ENCODE measurements at regions of chr17 and their contacts with region 1.

Region 1: GRCh38 chr17:30378824-30379302 is at the start of gene CPD:
- DNase-seq: peak; percentile 97
- H3K4me3 Mint-ChIP-seq: peak within 1 kb of the TSS; percentile 92
- H3K27ac Mint-ChIP-seq: peak within 1 kb of the TSS; percentile 97
- H3K4me1 Mint-ChIP-seq: peaks cover 67% of the 10 kb centered on the region
- H3K27me3 Mint-ChIP-seq: no peaks in the 10 kb centered on the region
- total RNA-seq, gene CPD: 29.7 and 35.3 TPM in 2 replicates

Region 2: GRCh38 chr17:30291543-30292285 is 87.1 kb before region 1 on chr17 and contains the start of gene BLMH:
- intact Hi-C with region 1: loop called (anchors 2 kb)
- DNase-seq: peak; percentile 80
- H3K4me3 Mint-ChIP-seq: peak within 1 kb of the TSS; percentile 97
- H3K27ac Mint-ChIP-seq: peak within 1 kb of the TSS; percentile 90
- H3K4me1 Mint-ChIP-seq: peaks cover 13% of the 10 kb centered on the region
- H3K27me3 Mint-ChIP-seq: no peaks in the 10 kb centered on the region
- total RNA-seq, gene BLMH: 64.8 and 64.9 TPM in 2 replicates

Region 3: DNA sequence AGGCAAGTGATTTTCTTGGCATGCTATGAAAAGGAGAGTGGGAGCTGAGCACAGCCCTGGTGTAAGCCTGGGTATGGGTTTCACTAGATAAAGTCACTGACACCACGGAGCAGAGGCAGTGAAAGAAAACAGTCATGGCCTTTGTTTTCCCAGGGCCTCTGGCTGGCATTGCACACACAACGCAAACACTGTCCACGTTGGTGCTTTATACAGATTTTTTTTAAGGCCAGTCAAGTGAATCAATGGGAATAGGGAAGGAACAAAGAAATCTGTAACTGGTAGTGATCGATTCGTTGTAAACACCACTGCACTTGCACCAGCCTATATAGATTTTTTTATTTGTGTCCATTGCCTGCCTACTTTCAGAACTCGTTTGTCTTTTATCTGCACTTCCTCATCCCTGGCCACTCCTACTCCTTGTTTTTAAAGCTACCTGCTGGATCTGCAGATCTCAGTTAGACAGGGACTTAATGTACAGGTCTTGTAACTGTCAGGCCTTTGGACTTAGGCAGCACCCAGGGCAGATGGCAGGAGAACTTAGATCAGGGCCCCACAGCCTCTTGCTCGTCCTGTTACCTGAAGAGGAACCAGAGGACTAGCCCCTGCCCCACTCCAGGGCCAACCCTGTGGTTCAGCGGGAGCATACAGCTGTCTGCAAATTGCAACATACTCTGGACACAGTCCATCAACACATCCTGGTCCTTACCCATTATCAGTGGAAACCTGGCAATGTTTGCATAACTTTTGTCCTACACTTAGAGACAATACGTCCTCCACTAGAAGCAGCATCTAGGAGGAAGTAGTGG is 34.4 kb before region 1 on chr17:
- intact Hi-C with region 1: loop called (anchors 1 kb)
- DNase-seq: no peak
- H3K4me3 Mint-ChIP-seq: no peak overlapping the region
- H3K27ac Mint-ChIP-seq: no peak overlapping the region
- H3K4me1 Mint-ChIP-seq: peaks cover 19% of the 10 kb centered on the region
- H3K27me3 Mint-ChIP-seq: peaks cover 7% of the 10 kb centered on the region

Region 4: GRCh38 chr17:30401097-30401496 is 22.2 kb after region 1 on chr17:
- intact Hi-C with region 1: no loop called
- DNase-seq: no peak
- H3K4me3 Mint-ChIP-seq: no peak overlapping the region
- H3K27ac Mint-ChIP-seq: no peak overlapping the region
- H3K4me1 Mint-ChIP-seq: peaks cover 10% of the 10 kb centered on the region
- H3K27me3 Mint-ChIP-seq: no peaks in the 10 kb centered on the region

Region 5: GRCh38 chr17:30413109-30413508 is 34.2 kb after region 1 on chr17:
- intact Hi-C with region 1: loop called (anchors 1 kb)
- DNase-seq: no peak
- H3K4me3 Mint-ChIP-seq: no peak overlapping the region
- H3K27ac Mint-ChIP-seq: peak overlapping the region; percentile 41
- H3K4me1 Mint-ChIP-seq: peaks cover 34% of the 10 kb centered on the region
- H3K27me3 Mint-ChIP-seq: no peaks in the 10 kb centered on the region